ENCODE measurements at regions of chr3 and their contacts with region 1.

Region 1: DNA sequence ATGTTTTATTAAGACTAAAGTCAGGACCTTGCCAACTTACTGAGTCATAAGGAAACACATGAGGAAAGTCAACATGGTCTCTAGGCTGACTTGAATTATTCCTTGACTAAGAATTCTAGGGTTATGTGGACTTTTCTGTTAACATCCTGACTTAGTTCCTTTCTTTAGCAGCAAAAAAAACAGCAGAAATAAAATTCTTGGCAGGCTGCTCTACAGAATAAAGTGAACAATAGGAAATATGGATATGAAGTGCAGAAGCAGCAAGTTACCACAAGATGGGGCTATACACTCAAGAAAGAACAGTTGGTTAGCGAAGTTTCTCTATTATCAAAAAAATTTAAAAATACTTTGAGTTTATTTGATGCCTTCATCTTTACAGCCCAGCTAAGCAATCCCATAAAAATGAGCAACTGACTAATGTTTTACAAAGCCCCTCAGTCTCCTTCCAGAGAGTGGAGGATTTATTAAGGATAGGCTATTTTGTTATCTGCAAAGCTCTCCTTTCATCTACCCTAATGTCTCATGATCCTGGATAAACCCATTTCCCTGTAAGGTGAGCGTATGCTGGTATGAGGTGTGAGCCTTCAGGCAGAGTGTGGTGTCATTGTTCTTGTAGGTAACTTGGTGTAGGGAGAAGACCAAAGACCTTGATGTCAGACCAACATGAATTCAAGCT is 23.1 kb upstream of the MCCC1 start:
- DNase-seq: no peak
- ATAC-seq: peak; percentile 74
- H3K4me3 Mint-ChIP-seq: no peak overlapping the region
- H3K27ac Mint-ChIP-seq: no peak overlapping the region
- H3K4me1 Mint-ChIP-seq: peaks cover 10% of the 10 kb centered on the region
- H3K27me3 Mint-ChIP-seq: peaks cover 4% of the 10 kb centered on the region

Region 2: GRCh38 chr3:182692021-182692420 is 430.4 kb before region 1 on chr3:
- CTCF ChIA-PET with region 1: no interaction called
- POLR2A ChIA-PET with region 1: no interaction called
- intact Hi-C with region 1: no loop called
- DNase-seq: no peak
- ATAC-seq: no peak
- H3K4me3 Mint-ChIP-seq: no peak overlapping the region
- H3K27ac Mint-ChIP-seq: no peak overlapping the region
- H3K4me1 Mint-ChIP-seq: no peaks in the 10 kb centered on the region
- H3K27me3 Mint-ChIP-seq: peaks cover 5% of the 10 kb centered on the region

Region 3: DNA sequence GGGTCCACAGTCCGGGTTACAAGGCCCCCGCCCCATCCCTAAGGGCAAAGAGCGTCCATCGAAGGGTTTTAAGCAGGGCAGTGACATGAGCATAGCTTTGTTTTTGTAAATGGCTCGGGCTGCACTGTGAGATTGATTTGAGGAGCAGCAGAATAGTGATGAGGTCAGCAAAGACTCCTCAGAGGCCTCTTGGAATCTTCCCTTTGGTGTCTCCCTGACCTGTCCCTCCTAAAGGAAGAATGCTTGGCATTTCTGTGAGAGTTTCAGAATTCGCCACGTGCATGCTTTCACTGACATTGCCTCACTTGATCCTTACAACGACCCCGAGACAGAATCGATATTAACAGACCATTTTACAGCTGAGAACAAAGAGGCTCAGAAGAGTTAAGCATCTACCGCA is 19.8 kb after region 1 on chr3:
- CTCF ChIA-PET with region 1: interaction called, 12 read pairs
- POLR2A ChIA-PET with region 1: interaction called, 4 read pairs
- intact Hi-C with region 1: no loop called
- DNase-seq: no peak
- ATAC-seq: no peak
- H3K4me3 Mint-ChIP-seq: no peak overlapping the region
- H3K27ac Mint-ChIP-seq: no peak overlapping the region
- H3K4me1 Mint-ChIP-seq: no peaks in the 10 kb centered on the region
- H3K27me3 Mint-ChIP-seq: no peaks in the 10 kb centered on the region

Region 4: DNA sequence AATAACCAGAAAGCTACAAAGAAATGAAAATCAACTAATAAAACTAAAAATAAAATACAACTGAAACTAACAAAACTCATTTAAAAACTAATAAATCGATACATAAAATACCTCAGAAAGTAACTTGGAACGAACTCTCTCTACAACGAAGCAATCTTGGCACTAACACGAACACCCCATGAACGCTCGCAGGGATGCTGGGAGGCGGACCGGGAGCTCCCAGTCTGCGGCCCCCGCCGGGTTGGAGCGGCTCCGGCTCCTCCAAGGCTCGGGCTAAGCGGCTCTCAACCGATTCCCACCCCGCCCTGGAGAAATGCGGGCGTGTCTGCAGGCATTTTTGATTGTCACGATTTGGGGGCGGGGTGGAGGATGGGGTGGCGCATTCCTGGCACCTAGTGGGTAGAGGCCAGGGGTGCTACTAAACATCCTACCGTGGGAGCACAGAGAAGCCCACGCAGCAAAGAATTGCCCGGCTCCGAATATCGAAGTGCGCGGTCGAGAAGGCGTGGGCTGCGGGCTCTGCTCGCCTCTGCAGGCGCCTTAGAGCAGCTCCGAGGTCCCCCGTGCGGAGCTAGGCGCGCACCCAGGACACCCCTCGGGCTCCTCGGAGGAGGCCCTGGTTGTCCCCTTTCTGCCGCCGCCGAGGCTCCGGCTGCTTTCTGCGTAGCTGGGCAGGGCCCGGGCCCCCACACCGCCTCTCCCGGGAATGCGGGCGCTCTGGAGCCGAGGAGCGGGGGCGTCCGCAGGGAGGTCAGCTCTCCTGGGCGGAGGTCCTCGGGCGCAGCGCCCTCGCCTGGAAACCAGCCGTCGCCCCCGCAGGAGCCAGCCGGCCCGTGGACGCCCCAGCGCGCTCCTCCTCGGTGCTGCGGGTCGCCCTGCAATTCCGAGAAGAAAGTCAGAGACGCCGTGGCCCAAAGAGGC is 56.5 kb after region 1 on chr3:
- CTCF ChIA-PET with region 1: interaction called, 52 read pairs
- POLR2A ChIA-PET with region 1: no interaction called
- intact Hi-C with region 1: loop called (anchors 1 kb)
- DNase-seq: peak; percentile 82
- ATAC-seq: peak; percentile 82
- H3K4me3 Mint-ChIP-seq: peak overlapping the region; percentile 70
- H3K27ac Mint-ChIP-seq: no peak overlapping the region
- H3K4me1 Mint-ChIP-seq: peaks cover 7% of the 10 kb centered on the region
- H3K27me3 Mint-ChIP-seq: peaks cover 25% of the 10 kb centered on the region

Region 5: GRCh38 chr3:183385698-183386613 is 263.6 kb after region 1 on chr3:
- CTCF ChIA-PET with region 1: interaction called, 141 read pairs
- POLR2A ChIA-PET with region 1: no interaction called
- intact Hi-C with region 1: loop called (anchors 1 kb)
- DNase-seq: peak; percentile 74
- ATAC-seq: peak; percentile 80
- H3K4me3 Mint-ChIP-seq: no peak overlapping the region
- H3K27ac Mint-ChIP-seq: no peak overlapping the region
- H3K4me1 Mint-ChIP-seq: peaks cover 14% of the 10 kb centered on the region
- H3K27me3 Mint-ChIP-seq: no peaks in the 10 kb centered on the region

Region 6: DNA sequence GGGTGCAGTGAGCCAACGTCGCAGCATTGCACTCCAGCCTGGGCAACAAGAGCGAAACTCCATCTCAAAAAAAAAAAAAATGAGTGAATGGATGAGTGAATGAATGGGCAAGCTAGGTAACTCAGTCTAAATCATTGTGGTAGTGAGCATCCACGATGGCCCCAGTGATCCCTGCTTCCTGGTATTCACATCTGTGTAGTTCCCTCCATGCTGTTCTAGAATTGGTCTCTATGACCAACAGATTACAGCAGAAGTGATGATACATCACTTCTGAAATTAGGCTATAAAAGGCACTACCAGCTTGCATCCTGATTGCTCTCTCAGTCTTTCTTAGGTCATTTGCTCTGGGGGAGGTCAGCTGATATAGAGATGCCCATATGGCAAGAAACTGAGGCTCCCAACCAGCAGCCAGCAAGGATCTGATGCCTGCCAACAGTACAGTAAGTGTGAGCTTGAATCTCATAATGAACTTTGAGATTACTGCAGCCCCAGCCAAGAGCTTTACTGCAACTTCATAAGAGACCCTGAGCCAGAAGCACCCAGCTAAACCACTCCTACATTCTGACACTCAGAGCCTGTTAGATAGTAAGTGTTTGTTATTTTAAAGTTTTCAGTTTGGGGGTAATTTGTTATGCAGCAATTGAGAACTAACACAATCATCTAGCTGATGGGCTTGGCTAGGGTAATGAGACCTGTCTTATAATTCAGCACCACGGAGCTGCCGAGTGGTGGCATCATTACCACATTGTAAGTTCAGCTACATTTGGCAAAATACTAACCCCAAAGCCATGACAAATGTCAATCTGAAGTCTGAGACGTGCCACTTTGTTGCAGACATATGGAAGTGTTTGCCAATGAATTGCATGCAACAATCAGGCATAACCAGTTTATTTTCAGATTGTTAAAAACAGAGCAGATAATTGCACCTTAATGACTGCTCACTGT is 380.1 kb after region 1 on chr3:
- CTCF ChIA-PET with region 1: no interaction called
- POLR2A ChIA-PET with region 1: no interaction called
- intact Hi-C with region 1: no loop called
- DNase-seq: no peak
- ATAC-seq: peak; percentile 63
- H3K4me3 Mint-ChIP-seq: no peak overlapping the region
- H3K27ac Mint-ChIP-seq: peak overlapping the region; percentile 38
- H3K4me1 Mint-ChIP-seq: peaks cover 12% of the 10 kb centered on the region
- H3K27me3 Mint-ChIP-seq: no peaks in the 10 kb centered on the region

Region 7: DNA sequence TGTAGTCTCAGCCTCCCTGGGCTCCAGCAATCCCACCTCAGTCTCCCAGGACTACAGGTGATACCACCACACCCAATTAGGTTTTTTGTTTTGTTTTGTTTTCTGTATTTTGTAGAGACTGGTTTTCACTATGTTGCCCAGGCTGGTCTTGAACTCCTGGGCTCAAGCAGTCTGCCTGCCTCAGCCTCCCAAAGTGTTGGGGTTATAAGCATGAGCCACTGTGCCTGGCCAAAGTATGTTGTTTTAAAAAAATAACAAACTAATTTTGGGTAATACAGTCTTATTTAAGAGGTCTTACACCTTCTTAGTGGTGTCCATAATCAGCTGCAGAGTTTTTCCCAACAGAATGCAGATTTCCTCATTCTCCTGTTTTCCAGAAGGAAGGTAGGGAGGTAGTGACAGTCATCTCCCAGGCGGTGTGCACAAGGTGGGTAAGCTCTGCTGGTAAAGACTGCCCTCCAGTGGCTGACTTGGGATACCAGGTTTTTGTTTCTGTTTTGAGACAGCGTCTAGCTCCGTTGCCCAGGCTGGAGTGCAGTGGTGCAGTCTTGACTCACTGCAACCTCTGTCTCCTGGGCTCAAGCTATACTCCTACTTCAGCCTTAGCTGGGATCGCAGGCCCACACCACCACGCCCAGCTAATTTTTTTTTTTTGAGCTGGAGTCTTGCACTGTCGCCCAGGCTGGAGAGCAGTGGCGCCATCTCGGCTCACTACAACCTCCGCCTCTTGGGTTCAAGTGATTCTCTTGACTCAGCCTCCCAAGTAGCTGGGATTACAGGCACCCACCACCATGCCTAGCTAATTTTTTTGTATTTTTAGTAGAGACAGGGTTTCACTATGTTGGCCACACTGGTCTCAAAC is 644.6 kb after region 1 on chr3:
- CTCF ChIA-PET with region 1: interaction called, 3 read pairs
- POLR2A ChIA-PET with region 1: no interaction called
- intact Hi-C with region 1: loop called in 1 of 2 experiments (anchors 5 kb)
- DNase-seq: peak; percentile 85
- ATAC-seq: peak; percentile 95
- H3K4me3 Mint-ChIP-seq: no peak overlapping the region
- H3K27ac Mint-ChIP-seq: no peak overlapping the region
- H3K4me1 Mint-ChIP-seq: peaks cover 9% of the 10 kb centered on the region
- H3K27me3 Mint-ChIP-seq: no peaks in the 10 kb centered on the region